A549 (cell line): ENCODE measurements at regions of chr11 and their contacts with region 1.

Region 1: DNA sequence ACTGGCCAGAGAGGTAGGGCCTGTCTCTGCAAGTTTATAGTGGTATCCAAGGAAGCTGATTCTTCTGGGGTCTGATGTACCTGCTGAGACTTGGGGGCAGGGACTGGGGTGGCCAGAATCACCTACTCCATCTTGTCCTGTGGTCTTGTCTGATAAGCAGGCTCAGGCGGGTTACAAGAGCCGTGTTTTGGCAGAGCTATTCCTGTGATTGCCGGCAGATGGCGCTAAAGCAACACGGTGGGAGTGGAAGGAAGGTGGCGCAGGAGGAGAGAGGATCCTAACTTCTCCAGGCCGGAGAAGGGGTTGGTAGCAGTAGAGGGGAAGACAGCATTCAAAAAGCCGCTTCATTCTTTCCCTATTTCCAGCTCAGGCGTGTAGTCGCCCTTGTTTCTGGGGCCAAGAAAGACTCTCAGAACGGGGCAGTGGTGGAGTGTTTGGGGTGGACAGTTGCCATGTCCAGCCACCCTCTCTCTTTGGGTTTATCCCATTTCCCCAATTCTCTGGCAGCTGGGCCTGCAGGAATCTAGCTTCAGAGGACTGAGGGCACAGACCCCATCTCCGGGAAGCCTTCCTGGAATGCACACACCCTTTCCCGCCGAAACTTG is 15.1 kb downstream of the CHRM1 start:
- DNase-seq: peak; percentile 84 to 87
- ATAC-seq: peak; percentile 80 to 90
- H3K4me3 ChIP-seq: no peak overlapping the region
- H3K27ac ChIP-seq: no peak overlapping the region
- H3K4me1 ChIP-seq: 0 out of 3 replicates have a peak, but pooled peaks cover 3% of the 10 kb centered on the region
- CTCF ChIP-seq: peak; percentile 94
- EP300 ChIP-seq: no peak
- POLR2A ChIP-seq: no peak
- RAD21 ChIP-seq: peak; percentile 96 to 99

Region 2: GRCh38 chr11:62922658-62923431 is 16.8 kb after region 1 on chr11:
- CTCF ChIA-PET with region 1: interaction called, 174 read pairs
- POLR2A ChIA-PET with region 1: no interaction called
- DNase-seq: peak; percentile 50 to 59
- ATAC-seq: peak; percentile 36 to 71; a peak in 5 of 6 replicates
- H3K4me3 ChIP-seq: peak overlapping the region; percentile 49
- H3K27ac ChIP-seq: peak overlapping the region; percentile 36 to 53; a peak in 5 of 6 replicates
- H3K4me1 ChIP-seq: peaks cover 26% of the 10 kb centered on the region
- CTCF ChIP-seq: peak; percentile 21; the same call in 2 of the 3 replicates
- EP300 ChIP-seq: no peak
- POLR2A ChIP-seq: no peak
- RAD21 ChIP-seq: peak in 1 of 2 experiments; percentile 47; a peak in 3 of 5 replicates

Region 3: DNA sequence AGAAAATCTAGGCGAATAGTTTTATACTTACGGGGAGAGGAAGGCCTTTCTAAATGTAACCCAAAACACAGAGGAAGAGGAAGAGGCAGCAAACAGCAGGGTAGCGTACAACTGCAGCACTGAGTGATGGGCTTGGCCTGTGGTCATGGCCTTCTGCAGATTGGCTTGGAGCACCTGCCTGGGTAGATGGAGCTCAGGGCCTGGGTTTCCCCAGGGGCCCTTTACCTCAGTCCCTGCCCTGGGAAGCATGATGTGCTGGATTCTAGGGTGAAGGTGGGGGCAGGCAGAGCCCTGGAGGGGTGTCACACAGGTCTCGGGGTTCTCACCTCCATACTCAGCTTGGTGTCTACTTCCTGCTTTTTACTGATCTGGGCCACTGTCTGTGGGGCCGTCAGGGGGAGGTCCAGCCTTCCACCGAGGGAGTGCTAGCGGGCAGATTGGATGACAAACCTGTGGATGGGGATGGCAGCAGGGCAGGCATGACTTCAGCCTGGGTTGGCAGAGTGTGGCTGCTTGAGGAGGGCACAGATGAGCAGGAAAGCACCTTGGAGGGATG is 42.8 kb after region 1 on chr11:
- CTCF ChIA-PET with region 1: interaction called, 14 read pairs
- POLR2A ChIA-PET with region 1: no interaction called
- DNase-seq: no peak
- ATAC-seq: 0 out of 6 replicates have a peak, but pooled peaks of 1 of the 2 experiments have one; percentile 43
- H3K4me3 ChIP-seq: no peak overlapping the region
- H3K27ac ChIP-seq: no peak overlapping the region
- H3K4me1 ChIP-seq: no peaks in the 10 kb centered on the region
- CTCF ChIP-seq: no peak
- EP300 ChIP-seq: no peak
- POLR2A ChIP-seq: no peak
- RAD21 ChIP-seq: no peak

Region 4: GRCh38 chr11:62996271-62996670 is 90.2 kb after region 1 on chr11:
- CTCF ChIA-PET with region 1: interaction called, 13 read pairs
- POLR2A ChIA-PET with region 1: no interaction called
- DNase-seq: no peak
- ATAC-seq: no peak
- H3K4me3 ChIP-seq: no peak overlapping the region
- H3K27ac ChIP-seq: no peak overlapping the region
- H3K4me1 ChIP-seq: no peaks in the 10 kb centered on the region
- CTCF ChIP-seq: no peak
- EP300 ChIP-seq: no peak
- POLR2A ChIP-seq: no peak
- RAD21 ChIP-seq: no peak

Region 5: DNA sequence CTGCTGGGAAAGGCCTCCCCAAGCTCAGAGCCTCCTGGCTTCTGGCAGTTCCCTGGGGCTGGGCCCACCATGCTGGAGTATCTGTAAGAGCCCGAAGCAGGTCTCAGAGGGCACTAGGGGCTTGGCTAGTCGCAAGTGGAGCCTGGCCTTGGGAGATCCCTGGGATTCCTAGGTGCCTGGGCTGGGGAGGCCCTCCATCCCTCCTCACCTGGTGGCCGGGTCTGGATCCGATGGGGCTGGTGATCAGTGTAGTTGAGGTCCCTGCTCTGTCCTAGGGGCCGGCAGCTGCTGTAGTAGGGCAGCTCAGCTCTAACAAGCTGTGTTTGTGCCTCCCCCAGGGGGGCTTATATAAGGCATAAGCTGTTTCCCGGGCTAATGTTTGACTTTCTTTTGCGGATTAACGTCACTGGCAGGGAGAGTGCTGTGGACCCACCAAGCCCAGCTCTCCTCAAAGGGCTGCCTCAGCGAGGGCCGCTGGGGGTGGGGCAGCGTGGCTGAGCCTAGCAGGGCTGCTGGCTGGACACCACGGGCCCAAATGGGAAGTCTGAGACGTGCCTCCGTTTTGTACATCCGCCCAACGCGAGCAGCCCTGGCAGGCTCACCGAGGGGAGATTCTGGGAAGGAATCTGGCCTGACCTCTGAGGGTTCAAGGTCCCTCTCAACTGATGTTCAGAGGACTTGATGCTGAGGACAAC is 109.6 kb after region 1 on chr11 and contains the start of gene SLC22A8:
- CTCF ChIA-PET with region 1: interaction called, 461 read pairs
- POLR2A ChIA-PET with region 1: no interaction called
- DNase-seq: no peak
- ATAC-seq: no peak
- H3K4me3 ChIP-seq: no peak within 1 kb of the TSS
- H3K27ac ChIP-seq: no peak within 1 kb of the TSS
- H3K4me1 ChIP-seq: no peaks in the 10 kb centered on the region
- CTCF ChIP-seq: no peak
- EP300 ChIP-seq: no peak
- POLR2A ChIP-seq: no peak
- RAD21 ChIP-seq: no peak
- polyA plus RNA-seq, gene SLC22A8: not detected in 2 replicates

Region 6: DNA sequence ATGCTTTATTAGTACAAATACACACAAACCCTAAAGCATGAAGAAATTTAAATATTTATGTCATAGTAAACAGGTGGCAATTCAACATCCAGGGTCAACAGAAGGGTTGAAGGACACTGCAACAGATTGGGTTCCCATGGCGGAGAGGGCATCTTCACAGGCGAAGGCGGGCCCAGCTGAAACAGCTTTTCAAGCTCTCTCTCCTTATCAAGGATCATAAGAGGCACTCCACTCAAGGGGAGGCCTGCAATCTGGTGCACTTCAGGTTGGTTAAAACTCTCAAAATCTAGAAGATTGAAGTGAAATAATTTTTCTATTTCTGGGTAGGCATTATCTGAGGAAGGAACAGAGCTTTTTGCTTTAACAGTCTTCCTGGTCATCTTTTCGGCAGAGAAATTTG is 126.4 kb after region 1 on chr11:
- CTCF ChIA-PET with region 1: interaction called, 97 read pairs
- POLR2A ChIA-PET with region 1: no interaction called
- DNase-seq: no peak
- ATAC-seq: no peak
- H3K4me3 ChIP-seq: no peak overlapping the region
- H3K27ac ChIP-seq: no peak overlapping the region
- H3K4me1 ChIP-seq: no peaks in the 10 kb centered on the region
- CTCF ChIP-seq: no peak
- EP300 ChIP-seq: no peak
- POLR2A ChIP-seq: no peak
- RAD21 ChIP-seq: no peak

Region 7: DNA sequence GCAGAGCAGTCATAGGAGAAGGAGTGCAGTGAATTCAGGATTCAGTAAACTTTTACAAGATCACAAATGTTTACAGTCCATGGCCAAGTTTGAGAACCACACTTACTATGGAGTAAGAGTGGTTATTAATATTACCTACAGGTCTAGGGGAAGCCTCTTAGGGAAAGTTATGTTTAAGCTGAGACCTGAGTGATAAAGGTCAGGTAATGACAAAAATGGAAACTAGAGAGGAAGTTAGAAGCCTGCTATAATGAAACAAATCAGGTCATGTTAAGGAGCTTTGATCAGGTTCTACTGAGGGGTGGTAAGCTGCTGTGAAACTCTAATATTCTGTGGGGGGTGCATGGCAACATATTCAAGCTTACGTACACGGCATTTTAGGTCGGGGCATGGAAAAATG is 431.0 kb after region 1 on chr11:
- CTCF ChIA-PET with region 1: no interaction called
- POLR2A ChIA-PET with region 1: no interaction called
- DNase-seq: no peak
- ATAC-seq: no peak
- H3K4me3 ChIP-seq: no peak overlapping the region
- H3K27ac ChIP-seq: no peak overlapping the region
- H3K4me1 ChIP-seq: no peaks in the 10 kb centered on the region
- CTCF ChIP-seq: no peak
- EP300 ChIP-seq: no peak
- POLR2A ChIP-seq: no peak
- RAD21 ChIP-seq: no peak